BJ (cell line): ENCODE measurements at regions of chr12 and their contacts with region 1.

Region 1: GRCh38 chr12:110468212-110469048 is at the starts of genes FAM216A and GPN3:
- DNase-seq: peak; percentile 85
- H3K4me3 ChIP-seq: peak within 1 kb of the TSS; percentile 77
- H3K27me3 ChIP-seq: no peaks in the 10 kb centered on the region
- CTCF ChIP-seq: no peak
- polyA plus RNA-seq, gene FAM216A: 13.0 and 16.6 TPM in 2 replicates
- polyA plus RNA-seq, gene GPN3: 10.6 and 21.8 TPM in 2 replicates

Region 2: DNA sequence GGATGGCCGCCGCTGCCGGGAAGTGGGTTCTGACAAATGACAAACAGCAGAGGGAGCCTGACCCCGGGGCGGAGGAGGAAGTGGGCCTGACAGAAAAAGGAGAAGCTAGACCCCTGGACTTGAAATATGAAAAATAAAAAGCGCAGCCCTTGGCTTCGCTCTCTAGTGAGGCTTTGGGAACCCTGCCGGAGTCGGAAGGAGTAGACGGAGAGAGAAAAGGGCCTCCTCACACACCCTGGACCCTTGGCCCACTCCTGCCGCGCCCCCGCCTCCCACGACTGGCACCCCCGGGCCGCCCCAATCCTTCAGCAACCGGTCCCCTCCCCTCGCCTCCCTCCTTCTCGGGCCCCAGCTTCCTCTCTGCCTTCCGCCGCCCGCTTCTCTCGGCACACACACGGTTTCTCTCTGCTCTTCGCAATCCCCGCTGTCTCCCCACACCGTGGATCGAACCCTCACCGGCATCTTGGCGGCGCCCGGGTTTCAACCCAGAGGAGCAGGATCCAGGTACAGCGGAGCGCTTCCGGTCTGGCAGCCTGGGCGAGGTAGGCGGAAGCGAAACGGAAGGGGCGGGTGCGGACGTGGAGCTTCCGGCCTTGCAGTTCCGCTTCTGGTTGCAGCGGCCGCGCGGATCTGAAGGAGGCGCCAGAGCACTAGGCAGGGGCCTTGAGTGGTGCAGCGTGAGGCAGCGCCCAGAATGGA is 18.5 kb before region 1 on chr12 and contains the start of gene ARPC3:
- CTCF ChIA-PET with region 1: interaction called, 33 read pairs
- POLR2A ChIA-PET with region 1: interaction called, 6 read pairs
- DNase-seq: peak; percentile 61
- H3K4me3 ChIP-seq: peak within 1 kb of the TSS; percentile 100
- H3K27me3 ChIP-seq: no peaks in the 10 kb centered on the region
- CTCF ChIP-seq: peak; percentile 94
- polyA plus RNA-seq, gene ARPC3: 22.7 and 50.9 TPM in 2 replicates

Region 3: GRCh38 chr12:110501752-110502738 is 33.6 kb after region 1 on chr12 and contains the starts of genes RAD9B and VPS29:
- CTCF ChIA-PET with region 1: interaction called, 13 read pairs
- POLR2A ChIA-PET with region 1: no interaction called
- DNase-seq: peak; percentile 90
- H3K4me3 ChIP-seq: peak within 1 kb of the TSS; percentile 95
- H3K27me3 ChIP-seq: no peaks in the 10 kb centered on the region
- CTCF ChIP-seq: no peak
- polyA plus RNA-seq, gene RAD9B: 0.33 and 0.69 TPM in 2 replicates
- polyA plus RNA-seq, gene VPS29: 98.8 and 148 TPM in 2 replicates

Region 4: DNA sequence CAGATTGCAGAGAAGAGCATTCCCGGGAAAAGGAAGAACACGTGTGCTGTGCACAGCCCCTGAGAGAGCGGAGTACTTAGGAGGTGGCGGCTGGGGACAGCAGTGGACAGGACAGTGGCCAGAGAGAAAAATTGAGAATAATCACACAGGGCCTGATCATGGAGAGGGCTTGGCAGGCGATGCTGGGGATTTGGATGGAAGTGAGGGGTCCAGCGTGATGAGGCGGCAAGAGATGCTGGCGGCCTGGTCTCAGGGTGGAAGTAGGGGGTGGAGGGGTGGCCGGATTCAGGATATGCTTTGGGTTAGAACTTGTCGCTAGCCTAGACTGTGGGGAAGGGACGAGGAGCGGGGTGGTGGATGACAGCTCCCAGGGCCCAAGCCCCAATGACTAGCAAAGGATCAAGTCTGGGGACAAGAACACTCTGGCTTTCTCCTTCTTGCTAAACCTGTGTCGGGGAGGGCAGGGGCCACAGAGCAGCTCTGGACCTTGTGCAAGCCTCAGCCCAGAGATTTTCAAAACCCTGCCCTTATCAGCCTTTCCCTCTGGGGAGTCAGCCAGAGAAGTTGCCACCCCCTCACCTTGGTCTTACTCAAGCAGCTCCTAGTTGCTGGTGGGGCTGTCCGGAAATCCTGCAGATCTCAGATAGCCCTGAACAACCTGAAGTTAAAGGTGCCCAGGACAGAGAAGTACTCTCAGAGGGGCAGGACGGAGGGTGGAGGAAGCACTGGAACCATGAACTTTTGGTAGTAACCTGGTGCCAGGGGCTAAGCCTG is 219.2 kb after region 1 on chr12:
- CTCF ChIA-PET with region 1: no interaction called
- POLR2A ChIA-PET with region 1: interaction called, 14 read pairs
- DNase-seq: no peak
- H3K4me3 ChIP-seq: no peak overlapping the region
- H3K27me3 ChIP-seq: peaks cover 4% of the 10 kb centered on the region
- CTCF ChIP-seq: no peak

Region 5: DNA sequence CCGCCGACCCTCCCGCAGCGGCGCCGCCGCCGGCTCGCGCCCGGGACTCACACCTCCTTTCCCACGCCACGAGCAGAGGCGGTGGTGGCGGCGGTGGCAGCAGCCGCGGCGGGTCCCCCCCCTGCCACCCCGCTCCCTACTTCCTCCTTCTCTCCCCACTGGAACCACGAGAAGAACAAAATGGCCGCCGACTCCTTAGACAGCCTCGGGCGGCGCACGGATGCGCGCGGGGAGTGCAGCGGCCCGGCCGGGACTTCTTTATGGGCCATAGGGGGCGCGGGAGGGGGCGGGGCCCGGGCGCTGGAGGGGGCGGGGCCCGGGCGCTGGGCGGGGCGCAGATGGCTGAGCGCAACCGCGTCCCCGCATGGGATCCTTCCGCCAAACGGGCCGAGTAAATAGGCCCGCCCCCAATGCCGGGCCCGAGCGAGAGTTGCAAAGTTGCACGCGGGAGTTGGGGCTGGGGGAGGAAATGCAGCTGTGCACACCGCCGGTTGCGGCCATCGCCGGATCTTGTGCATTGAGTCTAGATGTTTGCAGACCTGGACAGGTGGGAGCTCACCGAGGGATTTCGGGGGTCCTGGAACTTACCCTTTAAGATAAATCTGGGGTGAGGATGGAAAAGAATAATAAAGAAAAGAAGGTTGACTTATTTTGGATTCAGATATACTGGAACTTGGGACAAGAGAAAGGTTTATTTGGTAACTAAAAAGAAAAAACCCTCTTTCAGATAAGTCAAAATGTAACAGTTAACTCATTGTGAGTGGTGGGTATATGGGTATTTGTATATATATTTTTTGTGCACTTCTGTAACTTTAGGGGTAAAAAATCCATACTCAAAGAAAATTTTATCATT is 274.5 kb after region 1 on chr12 and contains the start of gene PPP1CC:
- CTCF ChIA-PET with region 1: no interaction called
- POLR2A ChIA-PET with region 1: no interaction called
- DNase-seq: no peak
- H3K4me3 ChIP-seq: peak within 1 kb of the TSS; percentile 80
- H3K27me3 ChIP-seq: no peaks in the 10 kb centered on the region
- CTCF ChIP-seq: no peak
- polyA plus RNA-seq, gene PPP1CC: 58.1 and 91.5 TPM in 2 replicates